CD8-positive, alpha-beta memory T cell (primary cell): ENCODE measurements at regions of chr4 and their contacts with region 1.

Region 1: GRCh38 chr4:7081891-7082471 is 14.1 kb upstream of the GRPEL1 start:
- DNase-seq: no peak
- H3K4me3 ChIP-seq: no peak overlapping the region
- H3K4me3 Mint-ChIP-seq: no peak overlapping the region
- H3K27ac ChIP-seq: no peak overlapping the region
- H3K27ac Mint-ChIP-seq: no peak overlapping the region
- H3K4me1 ChIP-seq: no peaks in the 10 kb centered on the region
- H3K4me1 Mint-ChIP-seq: no peaks in the 10 kb centered on the region
- H3K27me3 ChIP-seq: peaks cover 27% of the 10 kb centered on the region
- H3K27me3 Mint-ChIP-seq: peaks cover 11 to 70% of the 10 kb centered on the region in 2 donors

Region 2: DNA sequence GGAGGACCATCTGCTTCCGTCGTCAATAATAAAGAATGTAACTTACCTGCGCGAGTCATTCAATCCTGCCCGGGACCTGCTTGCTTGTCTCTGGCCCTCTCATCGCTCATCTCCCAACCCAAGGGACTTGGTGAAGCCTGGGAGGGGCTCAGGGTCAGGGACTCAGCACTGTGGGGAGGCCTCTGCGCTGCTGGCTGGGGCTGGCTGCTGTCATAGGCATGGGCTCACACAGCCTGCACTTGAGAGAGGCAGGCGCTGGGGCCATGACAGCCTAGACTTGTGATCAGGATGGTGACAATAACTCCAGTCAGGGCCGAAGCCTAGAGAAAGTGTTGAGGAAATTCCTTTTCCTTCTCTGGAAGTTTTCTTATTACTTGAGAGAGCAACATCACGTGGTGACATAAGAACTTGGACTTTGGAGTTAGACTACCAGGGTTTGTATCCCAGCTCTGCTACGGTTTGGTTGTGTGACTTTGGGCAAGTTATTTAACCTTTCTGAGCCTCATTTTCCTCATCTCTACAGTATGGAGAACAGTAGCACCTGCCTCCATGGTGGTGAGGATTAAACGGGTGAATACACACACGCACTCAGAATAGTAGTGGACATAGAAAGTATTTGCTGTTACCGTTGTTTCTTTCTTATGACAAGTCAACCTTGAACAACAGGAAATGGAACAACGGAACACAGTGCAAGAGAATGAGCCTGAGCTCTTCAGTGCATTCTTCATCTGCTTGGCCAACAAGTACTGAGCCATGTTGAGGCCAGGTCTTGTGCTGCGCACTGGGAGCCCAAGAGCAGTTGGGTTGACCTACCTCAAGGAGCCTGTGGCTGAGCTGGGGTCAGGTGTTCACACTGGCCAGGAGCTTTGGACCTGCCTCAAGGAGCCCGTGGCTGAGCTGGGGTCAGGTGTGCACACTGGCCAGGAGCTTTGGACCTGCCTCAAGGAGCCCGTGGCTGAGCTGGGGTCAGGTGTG is 111.9 kb before region 1 on chr4:
- CTCF ChIA-PET with region 1: no interaction called
- POLR2A ChIA-PET with region 1: no interaction called
- DNase-seq: no peak
- H3K4me3 ChIP-seq: no peak overlapping the region
- H3K4me3 Mint-ChIP-seq: no peak overlapping the region
- H3K27ac ChIP-seq: no peak overlapping the region
- H3K27ac Mint-ChIP-seq: peak overlapping the region in 1 of 8 donors; percentile 17
- H3K4me1 ChIP-seq: peaks cover 9% of the 10 kb centered on the region
- H3K4me1 Mint-ChIP-seq: peaks cover 24 to 30% (median 29%) of the 10 kb centered on the region in 3 donors
- H3K27me3 ChIP-seq: no peaks in the 10 kb centered on the region
- H3K27me3 Mint-ChIP-seq: no peaks in the 10 kb centered on the region

Region 3: DNA sequence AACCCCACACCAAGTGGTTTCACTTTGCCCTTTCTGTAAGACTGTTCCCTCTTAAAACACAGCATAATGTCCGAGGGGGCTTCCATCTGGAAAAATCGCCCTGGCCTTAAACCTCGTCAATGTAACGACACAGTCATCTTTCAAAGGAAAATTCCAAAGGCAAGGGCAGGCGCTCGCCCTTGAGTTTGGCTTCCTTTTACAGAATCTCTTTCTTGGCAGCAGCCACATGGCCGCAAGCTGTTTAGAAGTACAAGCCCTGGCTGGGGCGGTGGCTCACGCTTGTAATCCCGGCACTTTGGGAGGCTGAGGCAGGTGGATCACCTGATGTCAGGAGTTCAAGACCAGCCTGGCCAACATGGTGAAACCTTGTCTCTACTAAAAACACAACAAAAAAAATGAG is 12.9 kb after region 1 on chr4:
- CTCF ChIA-PET with region 1: no interaction called
- POLR2A ChIA-PET with region 1: interaction called, 19 read pairs
- DNase-seq: no peak
- H3K4me3 ChIP-seq: no peak overlapping the region
- H3K4me3 Mint-ChIP-seq: no peak overlapping the region
- H3K27ac ChIP-seq: no peak overlapping the region
- H3K27ac Mint-ChIP-seq: no peak overlapping the region
- H3K4me1 ChIP-seq: no peaks in the 10 kb centered on the region
- H3K4me1 Mint-ChIP-seq: no peaks in the 10 kb centered on the region
- H3K27me3 ChIP-seq: no peaks in the 10 kb centered on the region
- H3K27me3 Mint-ChIP-seq: peaks cover 12 to 35% of the 10 kb centered on the region in 2 donors